Dorsolateral prefrontal cortex (tissue), 120 donors: ENCODE measurements at regions of chr7 and their contacts with region 1.

Region 1: DNA sequence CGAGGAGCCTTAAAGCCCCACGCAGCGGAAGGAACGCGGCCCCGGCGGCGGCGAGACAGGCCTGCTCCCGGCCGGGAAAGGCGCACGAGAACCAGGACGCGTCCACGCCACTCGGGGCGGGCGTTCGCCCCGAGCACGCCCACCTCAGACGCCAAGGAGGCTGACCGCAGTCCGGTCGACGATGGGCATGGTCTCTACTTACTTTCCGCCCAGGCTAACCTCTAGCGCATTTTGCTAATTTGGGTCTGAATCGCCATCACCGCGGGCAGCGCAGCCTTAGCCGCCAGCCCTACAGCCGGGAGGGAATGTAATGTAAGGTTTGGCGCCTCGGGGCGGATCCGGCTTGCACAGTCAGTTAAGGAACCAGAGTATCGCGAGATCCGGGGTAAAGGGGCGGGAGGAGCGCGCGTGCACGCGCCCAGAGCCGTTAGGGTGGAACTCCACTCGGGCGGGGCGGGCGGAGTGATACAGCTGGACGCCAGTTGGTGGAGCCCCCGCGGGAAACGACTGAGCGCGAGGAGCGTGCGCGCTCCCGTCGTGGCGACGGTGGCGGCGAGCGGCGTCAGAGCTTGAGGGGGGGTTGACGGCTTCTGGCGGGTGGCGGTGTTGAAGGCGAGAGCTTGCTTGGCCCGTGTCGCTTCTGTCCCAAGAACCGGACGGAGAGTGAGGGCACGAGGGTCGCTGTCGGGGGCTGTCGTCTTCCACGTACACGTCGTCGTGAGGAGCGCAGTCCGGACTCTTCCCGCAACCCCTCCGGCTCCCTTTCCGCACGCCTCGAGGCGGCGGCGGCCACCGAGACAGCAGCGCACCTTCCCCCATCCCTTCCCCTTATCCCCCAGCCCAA is at the start of gene LUC7L2:
- DNase-seq: peak; percentile 99 to 100 (median 100)
- H3K4me3 ChIP-seq: peak within 1 kb of the TSS; percentile 73 to 99 (median 93)
- H3K27ac ChIP-seq: peak within 1 kb of the TSS; percentile 96 to 100 (median 100)
- H3K27me3 ChIP-seq: no peaks in the 10 kb centered on the region
- CTCF ChIP-seq: peak in 45 of 56 donors; percentile 7 to 58 (median 34)
- total RNA-seq, gene LUC7L2: 87.7 to 161 (median 115) TPM

Region 2: GRCh38 chr7:139230774-139231512 is 128.6 kb before region 1 on chr7 and contains the start of gene UBN2:
- intact Hi-C with region 1: loop called in 1 of 2 experiments (anchors 10 kb)
- DNase-seq: peak; percentile 95 to 99 (median 98)
- H3K4me3 ChIP-seq: peak within 1 kb of the TSS; percentile 75 to 99 (median 95)
- H3K27ac ChIP-seq: peak within 1 kb of the TSS; percentile 79 to 100 (median 96)
- H3K27me3 ChIP-seq: no peaks in the 10 kb centered on the region
- CTCF ChIP-seq: peak in 22 of 56 donors; percentile 6 to 57 (median 30)
- total RNA-seq, gene UBN2: 40.4 to 73.9 (median 54.8) TPM

Region 3: DNA sequence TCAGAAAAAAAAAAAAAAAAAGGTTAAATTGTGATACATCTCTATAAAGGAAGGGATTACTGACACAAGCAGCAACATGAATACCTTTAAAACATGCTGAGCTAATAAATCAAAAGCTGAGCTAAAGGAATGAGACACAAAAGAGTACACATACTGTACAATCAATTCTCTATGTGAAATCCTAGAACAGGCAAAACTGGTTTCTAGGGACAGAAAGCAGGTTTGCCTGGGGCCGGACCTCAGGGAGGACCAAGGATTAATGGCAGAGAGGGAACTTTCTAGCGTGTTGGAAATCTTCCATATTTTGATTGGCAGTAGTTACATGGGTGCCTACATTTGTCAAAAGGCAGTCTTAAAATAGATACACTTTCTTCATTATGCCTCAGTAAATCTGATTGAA is 71.4 kb after region 1 on chr7:
- intact Hi-C with region 1: loop called (anchors 5 kb)
- DNase-seq: no peak
- H3K4me3 ChIP-seq: no peak overlapping the region
- H3K27ac ChIP-seq: peak overlapping the region in 58 of 59 donors; percentile 31 to 93 (median 82)
- H3K27me3 ChIP-seq: no peaks in the 10 kb centered on the region
- CTCF ChIP-seq: no peak

Region 4: DNA sequence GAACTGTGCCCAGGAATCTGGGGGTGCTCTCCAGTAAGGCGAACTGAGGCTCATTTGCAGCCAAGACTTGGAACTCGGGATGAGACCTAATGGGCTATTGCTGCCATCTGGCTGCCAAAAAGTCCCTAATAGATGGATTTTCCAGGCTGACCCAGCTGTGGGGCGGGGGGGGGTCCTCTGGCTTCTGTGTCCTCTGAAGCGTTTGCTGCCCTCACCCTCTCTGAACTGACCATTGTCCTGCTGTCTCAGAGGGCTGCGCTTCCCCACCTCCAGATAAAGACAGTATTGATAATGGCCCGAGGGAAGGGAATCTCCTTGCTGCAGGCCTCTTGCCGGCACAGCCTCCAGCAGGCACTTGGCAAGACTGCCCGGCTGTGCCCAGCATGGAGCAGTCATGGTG is 210.5 kb after region 1 on chr7:
- intact Hi-C with region 1: loop called in 1 of 2 experiments (anchors 5 kb)
- DNase-seq: peak in 9 of 10 donors; percentile 65 to 89 (median 73)
- H3K4me3 ChIP-seq: no peak overlapping the region
- H3K27ac ChIP-seq: peak overlapping the region in 43 of 59 donors; percentile 2 to 79 (median 56)
- H3K27me3 ChIP-seq: no peaks in the 10 kb centered on the region
- CTCF ChIP-seq: peak in 53 of 56 donors; percentile 9 to 76 (median 54)

Region 5: GRCh38 chr7:139602143-139602722 is 242.6 kb after region 1 on chr7:
- intact Hi-C with region 1: no loop called
- DNase-seq: no peak
- H3K4me3 ChIP-seq: no peak overlapping the region
- H3K27ac ChIP-seq: peak overlapping the region in 41 of 59 donors; percentile 4 to 78 (median 47)
- H3K27me3 ChIP-seq: no peaks in the 10 kb centered on the region
- CTCF ChIP-seq: peak; percentile 39 to 81 (median 64)